WTC11 (cell line): ENCODE measurements at regions of chr19 and their contacts with region 1.

Region 1: GRCh38 chr19:36245210-36246005 is 30.5 kb downstream of the ZNF146 start:
- DNase-seq: peak; percentile 85
- ATAC-seq: peak; percentile 87
- H3K4me3 Mint-ChIP-seq: peak overlapping the region; percentile 72
- H3K27ac Mint-ChIP-seq: peak overlapping the region; percentile 86
- H3K4me1 Mint-ChIP-seq: peaks cover 26% of the 10 kb centered on the region
- H3K27me3 Mint-ChIP-seq: peaks cover 4% of the 10 kb centered on the region; the same call in 1 of the 2 replicates
- CTCF ChIP-seq: no peak

Region 2: DNA sequence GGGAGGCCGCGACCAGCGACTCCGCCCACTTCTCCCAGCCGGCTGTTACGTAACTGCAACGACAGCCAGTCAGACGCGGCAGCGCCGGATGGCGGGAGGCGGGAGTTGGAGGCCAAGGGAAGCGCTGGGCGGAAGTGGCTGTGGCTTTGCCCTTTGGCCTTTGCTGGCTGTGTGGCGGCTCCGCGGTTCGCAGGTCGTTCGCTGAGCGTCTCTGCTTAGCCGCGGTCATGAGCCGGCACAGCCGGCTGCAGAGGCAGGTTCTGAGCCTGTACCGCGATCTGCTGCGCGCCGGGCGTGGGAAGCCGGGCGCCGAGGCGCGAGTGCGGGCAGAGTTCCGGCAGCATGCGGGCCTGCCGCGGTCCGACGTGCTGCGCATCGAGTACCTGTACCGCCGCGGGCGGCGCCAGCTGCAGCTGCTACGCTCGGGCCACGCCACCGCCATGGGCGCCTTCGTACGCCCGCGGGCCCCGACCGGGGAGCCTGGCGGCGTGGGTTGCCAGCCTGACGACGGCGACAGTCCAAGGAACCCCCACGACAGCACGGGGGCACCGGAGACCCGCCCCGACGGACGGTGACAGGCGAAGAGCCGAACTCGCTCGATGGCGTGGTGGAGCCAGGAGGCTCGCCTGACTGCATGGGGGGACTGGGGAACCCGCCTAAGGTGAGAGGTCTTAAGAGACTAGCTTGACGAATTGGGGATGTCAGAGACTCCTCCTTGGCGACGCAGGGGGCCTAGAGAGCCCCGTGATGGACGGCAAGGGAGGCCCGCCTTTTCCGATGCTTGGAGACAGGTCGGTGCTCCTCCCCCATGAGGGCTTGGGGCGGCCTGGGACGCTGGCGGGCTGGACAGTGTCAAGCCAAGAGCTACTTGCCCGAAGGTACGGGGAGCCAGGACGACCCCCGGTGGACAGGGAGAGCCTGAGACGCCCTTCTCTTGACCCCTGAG is 250.1 kb before region 1 on chr19 and contains the start of gene SDHAF1:
- CTCF ChIA-PET with region 1: no interaction called
- POLR2A ChIA-PET with region 1: no interaction called
- DNase-seq: peak; percentile 96
- ATAC-seq: peak; percentile 64
- H3K4me3 Mint-ChIP-seq: peak within 1 kb of the TSS; percentile 86
- H3K27ac Mint-ChIP-seq: peak within 1 kb of the TSS; percentile 94
- H3K4me1 Mint-ChIP-seq: peaks cover 14% of the 10 kb centered on the region
- H3K27me3 Mint-ChIP-seq: peaks cover 3% of the 10 kb centered on the region
- CTCF ChIP-seq: no peak
- total RNA-seq, gene SDHAF1: 19.5 to 20.8 TPM (median 20.4 TPM) in 3 replicates

Region 3: GRCh38 chr19:36103626-36104552 is 141.5 kb before region 1 on chr19:
- CTCF ChIA-PET with region 1: no interaction called
- POLR2A ChIA-PET with region 1: no interaction called
- DNase-seq: no peak
- ATAC-seq: no peak
- H3K4me3 Mint-ChIP-seq: no peak overlapping the region
- H3K27ac Mint-ChIP-seq: no peak overlapping the region
- H3K4me1 Mint-ChIP-seq: no peaks in the 10 kb centered on the region
- H3K27me3 Mint-ChIP-seq: no peaks in the 10 kb centered on the region
- CTCF ChIP-seq: no peak

Region 4: GRCh38 chr19:36214386-36215275 is 30.8 kb before region 1 on chr19 and contains the starts of genes ZNF146 and ZNF565:
- CTCF ChIA-PET with region 1: interaction called, 13 read pairs
- POLR2A ChIA-PET with region 1: interaction called, 8 read pairs
- DNase-seq: peak; percentile 98
- ATAC-seq: peak; percentile 96
- H3K4me3 Mint-ChIP-seq: no peak within 1 kb of the TSS
- H3K27ac Mint-ChIP-seq: no peak within 1 kb of the TSS; the same call in none of the 2 replicates
- H3K4me1 Mint-ChIP-seq: peaks cover 19% of the 10 kb centered on the region
- H3K27me3 Mint-ChIP-seq: no peaks in the 10 kb centered on the region
- CTCF ChIP-seq: no peak
- total RNA-seq, gene ZNF146: 122 to 128 TPM (median 124 TPM) in 3 replicates
- total RNA-seq, gene ZNF565: 2.5 to 3.0 TPM (median 2.8 TPM) in 3 replicates